OCI-LY7 (cell line): ENCODE measurements at regions of chr1 and their contacts with region 1.

Region 1: GRCh38 chr1:109041621-109042468 is at the start of gene WDR47:
- DNase-seq: peak; percentile 98
- H3K4me3 ChIP-seq: peak within 1 kb of the TSS; percentile 82
- H3K27ac ChIP-seq: peak within 1 kb of the TSS; percentile 65
- H3K4me1 ChIP-seq: peaks cover 15% of the 10 kb centered on the region
- CTCF ChIP-seq: 0 out of 2 replicates have a peak, but pooled peaks have one; percentile 6
- total RNA-seq, gene WDR47: 6.6 and 11.0 TPM in 2 replicates

Region 2: DNA sequence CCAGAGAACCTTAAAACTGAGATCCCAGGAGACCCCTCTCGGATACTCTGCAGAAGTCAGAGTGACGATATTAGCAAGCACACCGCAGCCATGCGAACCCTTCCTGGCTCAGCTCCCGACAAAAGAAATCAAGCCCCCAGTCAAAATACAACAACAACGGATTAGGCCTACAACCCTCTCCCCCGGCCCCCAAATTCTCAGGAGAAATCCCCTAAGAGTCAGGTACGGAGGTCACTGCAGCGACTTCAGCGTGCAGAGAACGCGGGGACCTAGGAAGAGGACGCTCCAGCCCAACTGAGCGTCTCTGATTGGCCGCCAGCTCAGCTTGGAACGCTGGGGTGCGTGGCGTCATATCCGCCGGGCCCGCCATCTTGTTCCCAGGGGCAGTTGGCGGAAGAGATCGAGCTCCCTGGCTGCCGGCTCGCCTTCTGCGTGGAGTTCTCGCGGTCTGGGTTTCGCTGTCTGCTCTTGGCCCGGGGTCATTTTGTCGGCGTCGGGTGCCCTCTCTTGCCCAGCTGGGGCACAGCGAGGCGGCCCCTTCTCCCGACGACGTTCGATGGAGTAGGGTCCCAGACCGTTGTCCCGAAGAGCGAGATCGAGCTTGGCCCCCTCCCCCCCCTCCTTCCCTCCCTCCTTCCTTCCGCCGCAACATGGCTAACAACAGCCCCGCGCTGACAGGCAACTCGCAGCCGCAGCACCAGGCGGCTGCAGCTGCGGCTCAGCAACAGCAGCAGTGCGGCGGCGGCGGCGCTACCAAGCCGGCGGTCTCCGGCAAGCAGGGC is 349.7 kb before region 1 on chr1 and contains the start of gene PRPF38B:
- CTCF ChIA-PET with region 1: no interaction called
- POLR2A ChIA-PET with region 1: no interaction called
- intact Hi-C with region 1: loop called (anchors 2 kb)
- DNase-seq: peak; percentile 94
- H3K4me3 ChIP-seq: peak within 1 kb of the TSS; percentile 97
- H3K27ac ChIP-seq: peak within 1 kb of the TSS; percentile 83
- H3K4me1 ChIP-seq: peaks cover 28% of the 10 kb centered on the region
- CTCF ChIP-seq: no peak
- total RNA-seq, gene PRPF38B: 37.7 and 47.4 TPM in 2 replicates

Region 3: DNA sequence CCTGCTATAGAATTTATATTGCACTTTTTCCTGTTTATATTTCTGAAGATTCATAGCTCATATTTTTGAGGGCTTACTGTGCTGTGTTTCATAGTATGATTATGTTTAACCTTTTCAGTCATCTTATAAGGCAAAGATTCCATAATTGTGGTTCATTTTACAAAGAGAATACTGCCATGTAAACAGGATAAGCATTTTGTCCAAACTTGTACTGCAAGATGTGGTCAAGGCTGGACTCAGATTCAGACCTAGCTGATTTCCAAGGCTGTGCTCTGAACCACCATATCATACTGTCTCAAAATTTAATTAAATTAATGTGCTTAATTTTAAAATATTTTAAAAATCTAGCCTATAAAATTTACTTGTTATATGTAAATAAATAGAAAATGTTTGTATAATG is 264.0 kb before region 1 on chr1:
- CTCF ChIA-PET with region 1: no interaction called
- POLR2A ChIA-PET with region 1: no interaction called
- intact Hi-C with region 1: no loop called
- DNase-seq: no peak
- H3K4me3 ChIP-seq: no peak overlapping the region
- H3K27ac ChIP-seq: no peak overlapping the region
- H3K4me1 ChIP-seq: no peaks in the 10 kb centered on the region
- CTCF ChIP-seq: no peak

Region 4: GRCh38 chr1:108947871-108948525 is 93.8 kb before region 1 on chr1:
- CTCF ChIA-PET with region 1: no interaction called
- POLR2A ChIA-PET with region 1: no interaction called
- intact Hi-C with region 1: no loop called
- DNase-seq: no peak
- H3K4me3 ChIP-seq: no peak overlapping the region
- H3K27ac ChIP-seq: no peak overlapping the region
- H3K4me1 ChIP-seq: no peaks in the 10 kb centered on the region
- CTCF ChIP-seq: no peak

Region 5: GRCh38 chr1:108963052-108963686 is 78.7 kb before region 1 on chr1 and contains the start of gene CLCC1:
- CTCF ChIA-PET with region 1: no interaction called
- POLR2A ChIA-PET with region 1: interaction called, 10 read pairs
- intact Hi-C with region 1: loop called (anchors 1 kb)
- DNase-seq: peak; percentile 95
- H3K4me3 ChIP-seq: peak within 1 kb of the TSS; percentile 72
- H3K27ac ChIP-seq: peak within 1 kb of the TSS; percentile 76
- H3K4me1 ChIP-seq: peaks cover 17% of the 10 kb centered on the region
- CTCF ChIP-seq: no peak
- total RNA-seq, gene CLCC1: 8.7 and 9.8 TPM in 2 replicates

Region 6: DNA sequence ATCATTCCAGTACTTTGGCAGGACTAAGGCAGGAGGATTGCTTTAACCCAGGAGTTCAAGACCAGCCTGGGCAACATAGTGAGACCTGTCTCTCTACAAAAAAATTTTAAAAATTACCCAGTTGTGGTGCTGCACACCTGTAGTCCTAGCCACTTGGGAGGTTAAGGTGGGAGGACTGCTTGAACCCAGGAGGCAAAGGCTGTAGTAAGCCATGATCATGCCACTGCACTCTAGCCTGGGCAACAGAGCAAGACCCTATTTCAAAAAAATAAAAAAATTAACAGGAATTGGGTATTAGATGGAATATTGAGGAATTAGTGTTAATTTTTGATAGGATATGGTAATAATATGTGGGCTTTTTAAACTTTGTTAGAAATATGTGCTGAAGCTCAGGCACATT is 17.2 kb after region 1 on chr1:
- CTCF ChIA-PET with region 1: interaction called, 3 read pairs
- POLR2A ChIA-PET with region 1: interaction called, 5 read pairs
- intact Hi-C with region 1: loop called (anchors 2 kb)
- DNase-seq: no peak
- H3K4me3 ChIP-seq: no peak overlapping the region
- H3K27ac ChIP-seq: no peak overlapping the region
- H3K4me1 ChIP-seq: no peaks in the 10 kb centered on the region
- CTCF ChIP-seq: no peak

Region 7: DNA sequence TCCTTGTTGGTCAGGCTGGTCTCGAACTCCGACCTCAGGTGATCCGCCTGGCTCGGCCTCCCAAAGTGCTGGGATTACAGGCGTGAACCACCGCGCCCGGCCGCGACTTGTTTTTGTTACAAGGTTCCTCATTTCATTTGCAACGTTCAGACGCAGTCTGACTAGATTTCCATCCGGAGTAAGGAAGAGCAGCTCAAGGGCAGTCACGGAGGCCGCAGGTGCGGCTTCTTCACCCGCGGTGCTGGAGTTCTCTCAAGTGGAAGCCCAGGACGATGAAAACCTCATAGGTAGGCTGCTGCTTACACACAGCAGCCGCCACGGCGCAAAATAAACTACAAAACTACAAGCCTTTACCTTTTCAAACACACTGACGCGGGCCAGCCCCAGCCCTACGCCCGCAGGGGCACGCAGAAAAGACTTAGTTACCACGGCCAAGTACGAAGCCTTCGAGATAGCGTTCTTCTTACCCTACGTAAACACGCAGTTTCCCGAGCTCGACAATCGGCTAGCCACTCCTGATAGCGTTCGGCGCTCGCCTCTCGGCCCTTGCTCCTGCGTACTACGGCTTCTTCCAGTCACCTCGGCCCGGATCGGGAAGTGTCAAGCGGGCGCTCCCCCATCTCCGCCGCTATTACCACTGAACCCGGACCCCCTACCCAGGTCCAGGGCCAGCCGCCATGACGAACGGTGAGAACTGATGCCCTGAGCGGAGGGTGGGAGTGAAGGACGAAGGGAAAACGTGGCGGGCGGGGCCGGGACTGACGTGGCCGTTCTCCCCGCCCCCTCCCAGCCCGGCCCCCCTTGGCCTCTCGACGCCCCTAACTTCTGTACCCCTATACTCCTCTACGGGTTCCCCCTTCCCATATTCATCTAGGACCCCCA is 48.6 kb after region 1 on chr1 and contains the start of gene TMEM167B:
- CTCF ChIA-PET with region 1: no interaction called
- POLR2A ChIA-PET with region 1: interaction called, 7 read pairs
- intact Hi-C with region 1: loop called (anchors 2 kb)
- DNase-seq: peak; percentile 94
- H3K4me3 ChIP-seq: peak within 1 kb of the TSS; percentile 90
- H3K27ac ChIP-seq: peak within 1 kb of the TSS; percentile 78
- H3K4me1 ChIP-seq: peaks cover 19% of the 10 kb centered on the region
- CTCF ChIP-seq: no peak
- total RNA-seq, gene TMEM167B: 12.3 and 14.9 TPM in 2 replicates